ENCODE measurements at regions of chr2 and their contacts with region 1.

Region 1: DNA sequence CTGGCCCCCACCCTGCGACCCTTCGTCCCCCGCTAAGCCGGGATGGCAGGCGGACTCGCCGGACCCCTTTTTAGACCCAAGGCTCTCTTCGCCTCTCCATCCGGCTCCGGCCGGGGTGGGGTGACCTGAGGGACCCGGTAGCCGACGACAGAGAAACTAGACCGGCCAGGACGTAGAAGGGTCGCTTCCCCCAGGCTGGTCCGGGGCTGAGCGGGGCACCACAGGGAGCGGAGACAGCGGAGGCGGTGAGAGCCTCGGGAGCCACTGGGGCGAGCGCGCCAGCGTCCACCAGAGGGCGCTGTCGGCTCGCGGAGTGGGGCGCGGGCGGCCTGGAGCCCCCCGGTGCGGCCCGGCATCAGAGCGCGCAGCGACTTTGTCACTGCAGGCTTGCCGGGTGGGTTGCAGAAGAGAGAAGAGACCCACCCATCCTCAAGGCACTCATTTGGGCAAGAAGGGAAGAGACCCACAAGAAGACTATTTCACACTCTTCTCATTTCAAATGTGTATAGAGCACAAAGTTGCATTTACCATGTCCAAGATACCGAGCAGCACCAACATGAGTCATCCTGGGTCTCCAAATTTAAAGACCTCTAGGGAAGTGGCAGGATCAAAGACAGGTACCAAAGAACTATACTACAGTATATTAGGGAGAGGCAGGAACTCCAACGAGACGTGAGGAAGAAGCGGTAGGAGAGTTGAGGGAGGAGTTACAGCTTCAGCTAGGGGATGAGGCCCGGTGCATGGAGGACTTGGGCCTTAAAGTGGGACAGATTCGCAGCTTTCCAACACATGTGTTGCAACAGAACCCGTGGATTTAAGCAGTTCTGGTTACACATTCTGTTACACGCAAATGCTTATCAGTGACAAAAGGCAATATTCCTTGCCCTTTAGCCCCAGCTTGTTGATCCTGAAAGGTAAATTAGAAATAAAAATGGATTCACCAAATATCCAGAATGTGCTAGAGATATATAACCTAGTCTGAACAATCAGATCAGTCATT is 7.6 kb upstream of the PRKCE start:
- DNase-seq: peak; percentile 75
- H3K4me3 ChIP-seq: peak overlapping the region; percentile 55
- H3K27ac ChIP-seq: no peak overlapping the region
- H3K4me1 ChIP-seq: no peaks in the 10 kb centered on the region
- H3K27me3 ChIP-seq: peaks cover 22% of the 10 kb centered on the region
- CTCF ChIP-seq: peak; percentile 77

Region 2: DNA sequence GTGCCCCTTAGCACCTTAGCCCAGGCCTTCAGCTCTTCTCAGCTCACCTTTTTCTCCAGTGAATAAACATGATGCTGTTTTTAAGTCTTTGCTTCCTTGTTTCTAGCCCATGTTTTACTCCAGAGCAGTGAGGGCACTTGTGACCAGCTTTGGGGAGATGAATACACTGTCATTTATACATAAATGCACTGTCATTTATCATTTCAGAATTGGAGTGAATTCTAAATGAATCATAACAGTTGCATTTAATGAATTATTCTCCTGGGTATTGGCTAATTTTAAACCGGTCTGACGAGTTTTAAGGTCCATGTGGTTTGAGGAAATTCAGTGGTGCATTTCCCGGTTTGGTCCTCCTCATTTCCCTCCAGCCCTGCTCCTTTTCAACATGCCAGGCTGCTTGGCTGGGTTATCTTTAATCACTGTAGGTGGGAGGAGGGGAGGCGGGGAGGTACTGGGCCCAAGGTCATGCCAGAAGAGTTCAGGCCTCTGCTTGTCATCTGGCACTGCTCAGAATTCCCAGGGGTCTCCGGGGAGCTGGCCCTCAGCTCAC is 31.5 kb after region 1 on chr2:
- CTCF ChIA-PET with region 1: no interaction called
- POLR2A ChIA-PET with region 1: no interaction called
- intact Hi-C with region 1: no loop called
- DNase-seq: no peak
- H3K4me3 ChIP-seq: no peak overlapping the region
- H3K27ac ChIP-seq: no peak overlapping the region
- H3K4me1 ChIP-seq: no peaks in the 10 kb centered on the region
- H3K27me3 ChIP-seq: no peaks in the 10 kb centered on the region
- CTCF ChIP-seq: no peak

Region 3: GRCh38 chr2:45935791-45936622 is 292.2 kb after region 1 on chr2:
- CTCF ChIA-PET with region 1: no interaction called
- POLR2A ChIA-PET with region 1: no interaction called
- intact Hi-C with region 1: loop called (anchors 1 kb)
- DNase-seq: peak; percentile 85
- H3K4me3 ChIP-seq: no peak overlapping the region
- H3K27ac ChIP-seq: no peak overlapping the region
- H3K4me1 ChIP-seq: peaks cover 14% of the 10 kb centered on the region
- H3K27me3 ChIP-seq: no peaks in the 10 kb centered on the region
- CTCF ChIP-seq: peak; percentile 78